Endothelial cell of umbilical vein (primary cell): ENCODE measurements at regions of chr11 and their contacts with region 1.

Region 1: DNA sequence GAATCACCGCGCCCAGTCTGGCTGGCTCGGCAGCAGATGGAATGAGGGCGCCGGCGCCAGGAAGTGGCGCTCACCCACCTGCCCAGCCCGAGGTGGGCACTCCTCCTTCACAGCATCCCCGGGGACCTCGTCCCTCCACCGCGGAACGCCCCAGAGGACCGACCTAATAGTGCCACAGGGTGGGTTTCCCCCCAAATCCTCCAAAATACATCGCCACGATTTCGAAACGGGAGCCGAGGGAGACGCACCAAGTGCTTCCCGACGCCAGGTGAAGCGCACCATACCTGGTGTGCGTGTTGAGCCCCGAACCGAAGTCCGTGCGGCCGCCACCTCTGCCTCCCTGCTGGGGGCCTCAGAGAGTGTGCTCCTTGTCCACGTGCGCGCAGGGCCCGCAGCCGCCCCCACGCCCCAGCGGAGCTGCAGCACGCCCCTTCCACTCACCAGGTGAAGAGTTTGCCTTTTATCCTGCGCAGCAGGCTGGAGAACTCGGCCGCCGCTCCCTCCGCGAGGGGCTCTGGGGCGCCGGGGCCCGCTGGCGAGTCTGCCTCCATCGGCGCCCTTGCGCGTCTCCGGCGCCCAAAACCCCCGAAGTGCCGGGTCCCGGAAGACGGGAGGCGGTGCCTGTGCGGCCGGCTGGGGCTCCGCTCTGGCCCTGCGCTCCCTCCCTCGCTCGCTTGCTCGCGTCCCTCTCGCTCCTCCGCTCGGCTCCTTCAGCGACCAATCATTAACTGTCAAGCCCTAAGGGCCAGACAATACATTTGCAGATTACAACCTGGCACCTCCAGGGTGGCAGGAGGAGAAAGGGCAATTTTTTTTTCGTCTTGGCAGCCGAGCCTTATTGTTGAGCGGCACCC is at the start of gene SLC35F2:
- DNase-seq: peak; percentile 90
- H3K4me3 ChIP-seq: peak within 1 kb of the TSS; percentile 63 to 87 (median 79)
- H3K27ac ChIP-seq: peak within 1 kb of the TSS; percentile 64
- H3K4me1 ChIP-seq: peaks cover 8% of the 10 kb centered on the region
- H3K27me3 ChIP-seq: no peaks in the 10 kb centered on the region
- CTCF ChIP-seq: no peak
- POLR2A ChIP-seq: peak; percentile 86
- total RNA-seq, gene SLC35F2: 57.8 and 59.7 TPM in 2 replicates

Region 2: DNA sequence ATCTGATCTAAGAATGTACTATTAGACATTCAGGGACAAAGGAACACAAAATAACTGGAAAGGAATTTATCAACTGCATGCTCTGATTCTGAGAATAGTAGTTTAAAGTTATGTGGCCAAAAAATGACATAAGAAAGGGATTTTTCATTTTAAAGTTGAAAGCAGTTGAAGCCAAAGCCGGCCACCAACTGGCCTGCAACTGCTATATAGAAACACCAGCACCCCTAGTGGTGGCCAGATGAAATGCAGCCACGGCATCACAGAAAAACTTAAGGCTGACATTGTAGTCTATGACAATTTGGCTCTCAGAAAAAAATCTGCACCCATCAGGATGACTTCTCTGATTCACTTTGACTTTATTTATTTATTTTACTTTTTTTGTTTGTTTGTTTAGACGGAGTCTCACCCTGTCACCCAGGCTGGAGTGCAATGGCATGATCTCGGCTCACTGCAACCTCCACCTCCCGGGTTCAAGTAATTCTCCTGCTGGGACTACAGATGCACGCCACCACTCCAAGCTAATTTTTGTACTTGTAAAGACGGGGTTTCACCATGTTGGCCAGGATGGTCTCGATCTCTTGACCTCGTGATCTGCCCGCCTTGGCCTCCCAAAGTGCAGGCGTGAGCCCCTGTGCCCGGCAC is 59.1 kb before region 1 on chr11:
- CTCF ChIA-PET with region 1: interaction called, 3 read pairs
- POLR2A ChIA-PET with region 1: interaction called, 4 read pairs
- dilution Hi-C with region 1: no loop called
- intact Hi-C with region 1: loop called (anchors 1 kb)
- DNase-seq: peak; percentile 65
- H3K4me3 ChIP-seq: no peak overlapping the region
- H3K27ac ChIP-seq: no peak overlapping the region
- H3K4me1 ChIP-seq: no peaks in the 10 kb centered on the region
- H3K27me3 ChIP-seq: no peaks in the 10 kb centered on the region
- CTCF ChIP-seq: peak; percentile 86 to 88
- POLR2A ChIP-seq: no peak

Region 3: GRCh38 chr11:107821199-107821927 is 37.1 kb before region 1 on chr11:
- CTCF ChIA-PET with region 1: interaction called, 10 read pairs
- POLR2A ChIA-PET with region 1: interaction called, 4 read pairs
- dilution Hi-C with region 1: no loop called
- intact Hi-C with region 1: loop called (anchors 1 kb)
- DNase-seq: peak; percentile 97
- H3K4me3 ChIP-seq: peak overlapping the region in 2 of 3 experiments; percentile 16 to 63
- H3K27ac ChIP-seq: peak overlapping the region; percentile 99
- H3K4me1 ChIP-seq: peaks cover 59% of the 10 kb centered on the region
- H3K27me3 ChIP-seq: no peaks in the 10 kb centered on the region
- CTCF ChIP-seq: no peak
- POLR2A ChIP-seq: peak; percentile 52

Region 4: DNA sequence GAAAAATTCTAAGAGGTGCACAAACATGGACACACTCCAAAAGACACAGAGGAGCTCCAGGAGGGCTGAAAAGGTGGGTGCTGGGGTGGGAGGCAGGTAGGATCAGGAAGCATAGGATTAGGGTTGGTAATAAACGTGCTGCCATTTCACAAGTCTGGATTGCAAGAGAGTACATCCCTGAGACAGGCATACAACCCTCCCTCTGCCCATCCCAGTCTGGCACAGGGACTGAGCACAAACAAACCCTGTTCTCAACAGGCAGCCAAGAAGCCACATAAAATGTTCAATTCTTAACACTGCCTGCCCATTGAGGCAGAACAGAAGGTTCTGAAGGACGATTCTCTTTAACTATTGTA is 18.3 kb before region 1 on chr11:
- CTCF ChIA-PET with region 1: interaction called, 11 read pairs
- POLR2A ChIA-PET with region 1: no interaction called
- dilution Hi-C with region 1: no loop called
- intact Hi-C with region 1: loop called (anchors 1 kb)
- DNase-seq: no peak
- H3K4me3 ChIP-seq: peak overlapping the region in 2 of 3 experiments; percentile 2 to 49
- H3K27ac ChIP-seq: peak overlapping the region; percentile 91
- H3K4me1 ChIP-seq: peaks cover 37% of the 10 kb centered on the region
- H3K27me3 ChIP-seq: no peaks in the 10 kb centered on the region
- CTCF ChIP-seq: no peak
- POLR2A ChIP-seq: no peak

Region 5: DNA sequence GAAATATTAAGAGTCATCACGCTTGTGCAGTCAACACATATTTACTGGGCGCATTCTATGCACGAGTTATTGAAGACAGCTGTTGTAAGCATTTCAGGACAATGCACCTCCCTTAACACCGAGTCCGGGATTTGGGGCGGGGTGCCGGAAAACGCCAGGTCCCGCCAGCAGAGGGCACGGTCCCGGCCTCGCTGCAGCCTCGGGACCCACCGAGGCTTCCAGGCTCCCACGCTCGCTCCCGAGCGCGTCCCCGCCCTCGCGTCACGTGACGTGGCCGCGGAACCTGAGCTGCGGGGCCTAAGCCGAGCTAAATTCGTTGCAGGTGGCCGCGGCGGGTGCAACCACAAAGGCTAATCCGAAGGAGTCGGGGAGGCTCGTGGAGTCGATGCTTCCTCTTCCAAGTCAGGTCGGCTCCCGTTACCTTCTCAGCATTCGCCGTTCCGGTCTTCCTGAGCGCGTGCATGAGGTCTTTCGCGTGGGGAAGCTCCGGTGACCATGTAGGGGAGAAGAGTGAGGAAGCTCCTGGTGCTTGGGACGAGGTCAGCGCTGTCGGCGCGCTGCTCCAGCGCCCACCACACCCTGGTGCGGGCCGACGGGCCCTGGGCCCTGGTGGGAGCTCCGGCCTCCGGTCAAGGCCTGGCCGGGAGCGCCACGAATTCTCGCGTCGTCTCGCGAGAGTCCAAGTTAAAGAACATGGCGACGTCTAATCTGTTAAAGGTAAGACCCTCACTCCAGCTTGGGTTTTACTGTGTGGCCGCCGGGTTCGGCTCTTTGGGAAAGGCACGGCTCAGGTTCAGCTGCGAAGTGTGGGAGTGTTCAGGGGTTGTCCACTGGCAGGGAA is 150.4 kb after region 1 on chr11 and contains the start of gene CUL5:
- CTCF ChIA-PET with region 1: no interaction called
- POLR2A ChIA-PET with region 1: no interaction called
- dilution Hi-C with region 1: no loop called
- intact Hi-C with region 1: loop called (anchors 2 kb)
- DNase-seq: peak; percentile 90
- H3K4me3 ChIP-seq: peak within 1 kb of the TSS; percentile 44 to 88 (median 60)
- H3K27ac ChIP-seq: peak within 1 kb of the TSS; percentile 75
- H3K4me1 ChIP-seq: peaks cover 12% of the 10 kb centered on the region
- H3K27me3 ChIP-seq: no peaks in the 10 kb centered on the region
- CTCF ChIP-seq: peak; percentile 91 to 96
- POLR2A ChIP-seq: peak; percentile 91
- total RNA-seq, gene CUL5: 36.6 and 37.6 TPM in 2 replicates